Breast epithelium (tissue), 4 donors: ENCODE measurements at regions of chr4 and their contacts with region 1.

Region 1: DNA sequence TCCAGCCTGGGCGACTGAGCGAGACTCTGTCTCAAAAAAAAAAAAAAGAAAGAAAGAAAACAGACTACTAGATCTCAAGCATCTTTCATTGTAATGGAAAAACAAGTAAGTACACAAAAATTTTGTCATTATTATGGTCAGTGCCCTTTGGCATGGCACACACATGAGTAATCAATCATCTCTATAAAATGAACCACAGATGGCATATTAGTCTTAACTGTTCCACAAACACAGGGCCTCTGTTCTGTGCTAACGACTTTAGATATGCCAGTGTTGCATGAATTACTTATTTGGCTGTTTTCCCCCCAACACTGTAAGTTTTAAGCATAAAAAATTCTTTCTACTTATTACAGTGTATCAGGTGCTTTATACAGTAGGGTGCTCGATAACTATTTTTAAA is 90.4 kb downstream of the COX7B2 start:
- DNase-seq: no peak
- H3K4me3 ChIP-seq: no peak overlapping the region
- H3K27ac ChIP-seq: no peak overlapping the region
- H3K4me1 ChIP-seq: no peaks in the 10 kb centered on the region
- H3K27me3 ChIP-seq: no peaks in the 10 kb centered on the region
- CTCF ChIP-seq: no peak
- POLR2A ChIP-seq: no peak

Region 2: DNA sequence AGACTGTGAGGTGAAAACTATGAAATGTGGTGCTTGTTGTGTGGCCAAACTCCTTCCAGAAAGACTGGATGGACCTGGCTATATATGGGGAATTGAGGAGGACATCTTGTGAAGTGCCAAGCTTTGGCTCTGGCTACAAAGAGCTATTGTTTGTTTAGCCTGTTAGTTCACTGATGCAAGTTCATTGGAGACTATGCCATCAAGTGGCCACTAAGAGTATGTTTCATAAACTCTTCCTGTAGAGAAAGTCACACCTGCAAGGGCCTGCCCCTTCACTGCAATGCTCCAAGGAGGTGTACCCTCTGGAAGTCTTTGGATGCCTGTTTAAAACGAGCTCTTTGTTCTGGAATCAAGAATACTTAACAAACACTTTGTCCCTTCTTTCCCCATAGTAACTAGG is 1076.7 kb before region 1 on chr4:
- intact Hi-C with region 1: no loop called
- DNase-seq: no peak
- H3K4me3 ChIP-seq: no peak overlapping the region
- H3K27ac ChIP-seq: no peak overlapping the region
- H3K4me1 ChIP-seq: no peaks in the 10 kb centered on the region
- H3K27me3 ChIP-seq: no peaks in the 10 kb centered on the region
- CTCF ChIP-seq: no peak
- POLR2A ChIP-seq: no peak

Region 3: DNA sequence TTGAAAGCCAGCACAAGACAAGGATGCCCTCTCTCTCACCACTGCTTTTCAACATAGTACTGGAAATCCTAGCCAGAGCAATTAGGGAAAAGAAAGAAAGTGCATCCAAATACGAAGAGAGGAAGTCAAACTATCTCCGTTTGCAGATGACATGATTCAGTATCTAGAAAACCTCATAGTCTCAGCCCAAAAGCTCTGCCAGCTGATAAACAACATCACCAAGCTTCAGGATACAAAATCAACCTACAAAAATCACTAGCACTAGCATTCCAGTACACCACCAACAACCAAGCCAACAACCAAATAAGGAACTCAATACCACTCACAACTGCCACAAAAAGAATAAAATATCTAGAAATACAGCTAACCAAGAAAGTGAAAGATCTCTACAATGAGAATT is 51.8 kb after region 1 on chr4:
- intact Hi-C with region 1: loop called (anchors 2 kb)
- DNase-seq: no peak
- H3K4me3 ChIP-seq: no peak overlapping the region
- H3K27ac ChIP-seq: no peak overlapping the region
- H3K4me1 ChIP-seq: no peaks in the 10 kb centered on the region
- H3K27me3 ChIP-seq: no peaks in the 10 kb centered on the region
- CTCF ChIP-seq: no peak
- POLR2A ChIP-seq: no peak